Common myeloid progenitor, CD34-positive (primary cell): ENCODE measurements at regions of chr5 and their contacts with region 1.

Region 1: DNA sequence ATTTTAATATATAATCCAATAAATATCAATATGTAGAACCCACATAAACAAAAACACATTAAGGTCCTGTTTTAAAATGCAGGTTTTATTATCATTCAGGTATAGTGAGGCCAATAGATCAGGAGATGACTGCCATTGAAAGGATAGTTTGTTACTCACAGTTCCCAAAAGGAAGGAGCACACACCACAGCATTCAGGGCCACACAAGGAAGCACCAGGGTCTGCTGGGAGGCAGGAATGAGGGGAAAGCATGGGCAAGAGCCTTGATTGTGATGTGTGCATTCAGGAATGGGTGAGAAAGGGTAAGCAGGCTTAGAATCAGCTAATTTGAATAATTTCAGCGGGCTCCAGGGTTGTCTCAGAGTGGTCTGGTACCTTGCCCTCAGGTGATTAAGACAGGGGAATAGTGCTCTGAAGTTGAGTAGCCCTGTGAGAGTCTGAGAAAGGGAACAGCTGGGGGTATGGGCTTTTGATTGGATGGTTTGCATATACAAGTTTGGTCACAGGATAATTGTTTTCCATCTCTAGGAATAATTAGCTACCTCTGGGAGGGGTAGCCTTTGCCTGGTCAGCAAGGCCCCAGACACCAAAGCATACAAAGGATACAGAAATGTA is 19.8 kb upstream of the OTULIN start:
- DNase-seq: no peak
- H3K4me3 ChIP-seq: no peak overlapping the region
- H3K27ac ChIP-seq: no peak overlapping the region
- H3K4me1 ChIP-seq: no peaks in the 10 kb centered on the region
- H3K27me3 ChIP-seq: peaks cover 0 to 1% (median 0%) of the 10 kb centered on the region in 5 experiments

Region 2: DNA sequence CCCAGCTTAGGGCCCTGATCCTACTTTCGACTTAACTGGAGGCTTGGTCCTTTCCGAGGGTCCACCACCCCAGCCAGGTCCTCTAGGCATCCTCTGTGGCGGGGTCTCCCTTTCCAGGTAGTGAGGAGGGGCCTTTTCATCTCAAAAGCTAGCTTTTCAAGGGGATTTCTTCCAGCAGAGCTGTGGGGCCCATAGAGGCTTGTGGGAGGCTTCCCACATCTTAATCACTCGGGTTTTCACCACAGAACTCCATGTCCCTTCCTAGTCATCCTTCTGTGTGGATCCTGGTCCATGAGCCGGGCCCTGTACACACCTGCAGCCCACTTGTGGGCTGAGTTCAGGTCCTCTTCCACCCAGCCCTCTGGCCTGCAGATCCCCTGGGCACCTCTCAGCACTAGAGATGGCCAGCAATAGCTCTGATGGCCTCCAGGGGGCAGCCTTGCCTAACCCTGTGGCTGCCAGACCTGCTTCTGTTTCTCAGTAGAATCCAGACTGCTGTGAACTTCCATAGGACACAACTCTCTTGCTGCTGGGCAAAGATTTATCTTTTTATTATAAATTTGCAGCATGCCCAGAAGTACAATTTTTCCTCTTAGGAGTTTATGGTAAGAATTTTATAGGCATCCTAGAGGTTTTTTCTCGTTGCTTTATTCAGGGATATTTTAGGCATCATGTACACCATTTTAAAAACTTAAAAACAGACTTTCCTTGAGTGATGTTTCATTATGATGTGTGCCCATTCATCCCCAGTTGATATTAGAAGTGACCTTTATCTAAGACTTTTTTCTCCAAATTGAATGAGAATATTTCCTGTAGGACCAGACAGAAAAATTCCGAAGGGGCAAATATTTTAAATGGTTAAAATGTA is 292.7 kb before region 1 on chr5:
- CTCF ChIA-PET with region 1: interaction called, 41 read pairs
- POLR2A ChIA-PET with region 1: no interaction called
- DNase-seq: peak; percentile 52 to 72 (median 67)
- H3K4me3 ChIP-seq: no peak overlapping the region
- H3K27ac ChIP-seq: no peak overlapping the region
- H3K4me1 ChIP-seq: peaks cover 0 to 18% (median 12%) of the 10 kb centered on the region in 4 experiments
- H3K27me3 ChIP-seq: no peaks in the 10 kb centered on the region

Region 3: GRCh38 chr5:14417276-14417730 is 227.4 kb before region 1 on chr5:
- CTCF ChIA-PET with region 1: interaction called, 11 read pairs
- POLR2A ChIA-PET with region 1: no interaction called
- DNase-seq: no peak
- H3K4me3 ChIP-seq: no peak overlapping the region
- H3K27ac ChIP-seq: peak overlapping the region in 1 of 2 experiments; percentile 25
- H3K4me1 ChIP-seq: peaks cover 0 to 2% (median 0%) of the 10 kb centered on the region in 4 experiments
- H3K27me3 ChIP-seq: no peaks in the 10 kb centered on the region

Region 4: GRCh38 chr5:14655146-14655741 is 10.5 kb after region 1 on chr5:
- CTCF ChIA-PET with region 1: interaction called, 10 read pairs
- POLR2A ChIA-PET with region 1: no interaction called
- DNase-seq: no peak
- H3K4me3 ChIP-seq: no peak overlapping the region
- H3K27ac ChIP-seq: no peak overlapping the region
- H3K4me1 ChIP-seq: peaks cover 0 to 2% (median under 1%) of the 10 kb centered on the region in 4 experiments
- H3K27me3 ChIP-seq: peaks cover 0 to 2% (median 0%) of the 10 kb centered on the region in 5 experiments